ENCODE measurements at regions of chr16 and their contacts with region 1.

Region 1: GRCh38 chr16:75402821-75403475 is 30.4 kb downstream of the CFDP1 start:
- DNase-seq: no peak
- H3K4me3 Mint-ChIP-seq: no peak overlapping the region
- H3K27ac Mint-ChIP-seq: no peak overlapping the region
- H3K4me1 Mint-ChIP-seq: peaks cover 12% of the 10 kb centered on the region
- H3K27me3 Mint-ChIP-seq: no peaks in the 10 kb centered on the region

Region 2: GRCh38 chr16:75198135-75198600 is 204.8 kb before region 1 on chr16:
- intact Hi-C with region 1: loop called (anchors 1 kb)
- DNase-seq: no peak
- H3K4me3 Mint-ChIP-seq: no peak overlapping the region
- H3K27ac Mint-ChIP-seq: no peak overlapping the region
- H3K4me1 Mint-ChIP-seq: peaks cover 16% of the 10 kb centered on the region
- H3K27me3 Mint-ChIP-seq: peaks cover 30% of the 10 kb centered on the region

Region 3: GRCh38 chr16:75238132-75238852 is 164.7 kb before region 1 on chr16:
- intact Hi-C with region 1: loop called (anchors 1 kb)
- DNase-seq: no peak
- H3K4me3 Mint-ChIP-seq: no peak overlapping the region
- H3K27ac Mint-ChIP-seq: no peak overlapping the region
- H3K4me1 Mint-ChIP-seq: peaks cover 2% of the 10 kb centered on the region
- H3K27me3 Mint-ChIP-seq: no peaks in the 10 kb centered on the region

Region 4: GRCh38 chr16:75379911-75380847 is 22.8 kb before region 1 on chr16:
- intact Hi-C with region 1: loop called (anchors 1 kb)
- DNase-seq: peak; percentile 81
- H3K4me3 Mint-ChIP-seq: peak overlapping the region; percentile 62
- H3K27ac Mint-ChIP-seq: peak overlapping the region; percentile 68
- H3K4me1 Mint-ChIP-seq: peaks cover 28% of the 10 kb centered on the region
- H3K27me3 Mint-ChIP-seq: peaks cover 33% of the 10 kb centered on the region

Region 5: GRCh38 chr16:75519881-75520280 is 116.9 kb after region 1 on chr16:
- intact Hi-C with region 1: no loop called
- DNase-seq: no peak
- H3K4me3 Mint-ChIP-seq: no peak overlapping the region
- H3K27ac Mint-ChIP-seq: no peak overlapping the region
- H3K4me1 Mint-ChIP-seq: peaks cover 10% of the 10 kb centered on the region
- H3K27me3 Mint-ChIP-seq: peaks cover 7% of the 10 kb centered on the region